Lower leg skin (tissue), 4 donors: ENCODE measurements at regions of chr1 and their contacts with region 1.

Region 1: GRCh38 chr1:204494281-204495077 is at the start of gene PIK3C2B:
- DNase-seq: peak; percentile 62 to 95
- H3K4me3 ChIP-seq: peak within 1 kb of the TSS; percentile 75
- CTCF ChIP-seq: peak in 1 of 3 donors; percentile 33
- POLR2A ChIP-seq: no peak
- total RNA-seq, gene PIK3C2B: 51.7 to 92.1 (median 62.1) TPM

Region 2: GRCh38 chr1:204431310-204432165 is 62.9 kb before region 1 on chr1:
- intact Hi-C with region 1: loop called (anchors 5 kb)
- DNase-seq: peak; percentile 74 to 96
- H3K4me3 ChIP-seq: no peak overlapping the region
- CTCF ChIP-seq: peak in 1 of 3 donors; percentile 42
- POLR2A ChIP-seq: no peak